IMR-90 (cell line): ENCODE measurements at regions of chr2 and their contacts with region 1.

Region 1: DNA sequence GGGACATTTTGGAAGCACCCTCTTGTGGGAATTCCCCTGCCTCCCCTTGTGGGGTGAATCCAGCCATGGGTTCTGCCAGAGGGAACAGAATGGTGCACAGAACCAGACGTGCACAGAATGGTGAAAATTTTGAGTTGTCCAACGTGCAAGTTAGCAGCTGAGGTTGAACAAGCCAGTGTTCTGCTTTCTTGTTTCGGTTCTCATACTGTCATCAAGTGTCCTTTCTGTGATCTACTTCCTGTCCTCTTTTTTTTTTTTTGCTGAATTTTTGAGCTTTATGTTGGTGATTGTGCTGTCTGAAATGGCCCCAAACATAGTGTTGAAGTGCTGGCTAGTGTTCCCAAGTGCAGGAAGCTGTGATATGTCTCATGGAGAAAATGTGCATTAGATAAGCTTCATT is 21.5 kb upstream of the REEP1 start:
- DNase-seq: no peak
- ATAC-seq: no peak
- H3K4me3 ChIP-seq: no peak overlapping the region
- H3K27ac ChIP-seq: no peak overlapping the region
- H3K4me1 ChIP-seq: no peaks in the 10 kb centered on the region
- H3K27me3 ChIP-seq: peaks cover 5% of the 10 kb centered on the region
- CTCF ChIP-seq: no peak
- POLR2A ChIP-seq: no peak
- RAD21 ChIP-seq: no peak

Region 2: DNA sequence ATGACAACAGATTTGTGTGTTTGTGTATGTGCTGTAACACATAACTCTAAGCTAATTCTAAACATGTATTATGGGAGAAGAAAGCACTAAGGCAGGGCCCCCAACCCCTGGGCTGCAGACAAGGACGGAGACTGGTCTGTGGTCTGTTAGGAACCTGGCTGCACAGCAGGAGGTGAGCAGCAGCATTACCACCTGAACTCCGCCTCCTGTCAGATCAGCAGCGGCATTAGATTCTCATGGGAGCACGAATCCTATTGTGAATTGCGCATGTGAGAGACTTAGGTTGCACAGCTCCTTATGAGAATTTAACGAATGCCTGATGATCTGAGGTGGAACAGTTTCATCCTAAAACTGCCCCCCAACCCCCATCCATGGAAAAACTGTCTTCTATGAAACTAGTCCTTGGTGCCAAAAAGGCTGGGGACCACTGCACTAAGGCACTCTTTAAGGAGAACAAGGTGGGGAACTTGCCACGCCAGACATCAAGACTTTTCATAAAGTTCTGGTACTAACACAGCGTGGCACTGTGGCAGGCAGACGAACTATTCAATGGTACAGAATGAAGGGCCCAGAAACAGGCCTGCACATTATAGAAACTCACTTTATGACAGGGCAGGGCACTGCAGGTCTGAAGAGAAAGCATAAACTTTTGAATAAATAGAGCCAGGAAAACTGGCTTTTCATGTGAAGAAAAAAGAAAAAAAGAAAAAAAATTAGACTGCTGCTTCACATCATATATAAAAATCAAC is 35.5 kb before region 1 on chr2:
- CTCF ChIA-PET with region 1: no interaction called
- POLR2A ChIA-PET with region 1: no interaction called
- dilution Hi-C with region 1: no loop called
- in situ Hi-C with region 1: no loop called
- intact Hi-C with region 1: loop called (anchors 1 kb)
- DNase-seq: no peak
- ATAC-seq: no peak
- H3K4me3 ChIP-seq: no peak overlapping the region
- H3K27ac ChIP-seq: no peak overlapping the region
- H3K4me1 ChIP-seq: no peaks in the 10 kb centered on the region
- H3K27me3 ChIP-seq: peaks cover 14% of the 10 kb centered on the region
- CTCF ChIP-seq: no peak
- POLR2A ChIP-seq: no peak
- RAD21 ChIP-seq: no peak